CD14-positive monocyte (primary cell): ENCODE measurements at regions of chr17 and their contacts with region 1.

Region 1: DNA sequence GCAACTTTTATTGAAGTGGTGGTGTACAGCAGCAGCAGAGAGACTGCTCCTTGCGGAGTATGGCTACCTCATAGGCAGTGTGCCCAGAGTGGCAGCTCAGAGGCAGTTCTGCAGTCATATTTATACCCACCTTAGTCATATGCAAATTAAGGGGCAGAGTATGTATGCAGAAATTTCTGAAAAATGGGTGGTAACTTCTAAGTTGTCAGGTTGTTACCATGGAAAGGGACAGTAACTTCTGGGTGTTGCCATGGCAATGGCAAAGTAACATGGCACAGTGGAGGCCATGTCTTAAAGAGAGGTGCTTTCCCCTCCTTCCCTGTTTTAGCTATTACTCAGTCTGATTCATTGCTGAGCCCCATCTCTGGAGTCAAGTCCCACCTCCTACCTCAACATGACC is 53.4 kb downstream of the MEOX1 start:
- DNase-seq: peak; percentile 78 to 91 (median 78)
- H3K4me3 ChIP-seq: no peak overlapping the region
- H3K4me3 Mint-ChIP-seq: no peak overlapping the region
- H3K27ac ChIP-seq: no peak overlapping the region
- H3K27ac Mint-ChIP-seq: peak overlapping the region in 6 of 7 donors; percentile 58 to 93 (median 76)
- H3K4me1 ChIP-seq: peaks cover 54% of the 10 kb centered on the region in 2 donors
- H3K4me1 Mint-ChIP-seq: peaks cover 48% of the 10 kb centered on the region
- H3K27me3 ChIP-seq: no peaks in the 10 kb centered on the region
- H3K27me3 Mint-ChIP-seq: peaks cover 2 to 8% (median 5%) of the 10 kb centered on the region in 3 donors
- CTCF ChIP-seq: no peak

Region 2: GRCh38 chr17:43645765-43646481 is 37.6 kb after region 1 on chr17:
- intact Hi-C with region 1: loop called in 1 of 2 experiments (anchors 5 kb)
- DNase-seq: peak; percentile 46 to 65 (median 51)
- H3K4me3 ChIP-seq: peak overlapping the region; percentile 18 to 73 (median 34)
- H3K4me3 Mint-ChIP-seq: peak overlapping the region; percentile 75 to 86
- H3K27ac ChIP-seq: no peak overlapping the region
- H3K27ac Mint-ChIP-seq: peak overlapping the region in 4 of 7 donors; percentile 37 to 83 (median 65)
- H3K4me1 ChIP-seq: peaks cover 12 to 31% of the 10 kb centered on the region in 2 donors
- H3K4me1 Mint-ChIP-seq: peaks cover 28% of the 10 kb centered on the region
- H3K27me3 ChIP-seq: peaks cover 0 to 12% of the 10 kb centered on the region in 2 donors
- H3K27me3 Mint-ChIP-seq: peaks cover 17 to 34% (median 21%) of the 10 kb centered on the region in 3 donors
- CTCF ChIP-seq: peak; percentile 31

Region 3: DNA sequence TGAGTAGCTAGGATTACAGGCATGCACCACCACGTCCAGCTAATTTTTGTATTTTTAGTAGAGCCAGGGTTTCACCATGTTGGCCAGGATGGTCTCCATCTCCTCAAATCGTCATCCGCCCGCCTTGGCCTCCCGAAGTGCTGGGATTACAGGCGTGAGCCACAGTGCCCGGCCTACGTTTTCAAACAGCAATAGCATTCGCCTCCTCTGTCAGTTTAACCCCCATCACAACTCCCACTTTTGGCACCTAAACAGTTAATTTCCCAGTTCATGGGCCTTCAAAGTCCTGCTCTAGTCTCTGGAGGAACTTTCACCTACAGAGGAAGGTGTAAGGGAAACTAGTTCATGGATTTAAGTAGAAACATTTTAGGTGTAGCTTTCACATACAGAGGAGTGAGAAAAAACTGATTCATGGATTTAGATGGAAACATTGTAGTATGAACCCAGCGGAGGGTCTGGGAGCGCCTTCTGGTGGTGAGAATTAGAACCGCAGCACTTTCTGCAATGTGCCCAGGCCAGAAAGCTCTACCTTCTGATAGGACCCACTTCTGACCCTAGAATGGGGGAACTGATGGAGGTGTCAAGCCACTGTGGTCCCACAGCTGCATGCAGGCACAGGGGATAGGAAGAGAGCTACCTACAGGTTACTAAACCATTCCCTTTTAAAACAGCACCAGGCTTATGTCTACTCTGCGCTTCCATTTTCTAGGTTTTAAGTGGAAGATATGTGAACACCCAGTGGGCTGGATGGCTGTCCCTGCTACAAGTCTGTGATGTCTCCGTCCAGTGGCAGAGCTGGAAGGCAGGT is 65.4 kb after region 1 on chr17:
- intact Hi-C with region 1: no loop called
- DNase-seq: peak; percentile 50 to 69 (median 59)
- H3K4me3 ChIP-seq: no peak overlapping the region
- H3K4me3 Mint-ChIP-seq: no peak overlapping the region
- H3K27ac ChIP-seq: no peak overlapping the region
- H3K27ac Mint-ChIP-seq: no peak overlapping the region
- H3K4me1 ChIP-seq: peaks cover 9 to 19% of the 10 kb centered on the region in 2 donors
- H3K4me1 Mint-ChIP-seq: peaks cover 17% of the 10 kb centered on the region
- H3K27me3 ChIP-seq: no peaks in the 10 kb centered on the region
- H3K27me3 Mint-ChIP-seq: peaks cover 0 to 4% (median 2%) of the 10 kb centered on the region in 3 donors
- CTCF ChIP-seq: peak; percentile 94